H1 (cell line): ENCODE measurements at regions of chr5 and their contacts with region 1.

Region 1: DNA sequence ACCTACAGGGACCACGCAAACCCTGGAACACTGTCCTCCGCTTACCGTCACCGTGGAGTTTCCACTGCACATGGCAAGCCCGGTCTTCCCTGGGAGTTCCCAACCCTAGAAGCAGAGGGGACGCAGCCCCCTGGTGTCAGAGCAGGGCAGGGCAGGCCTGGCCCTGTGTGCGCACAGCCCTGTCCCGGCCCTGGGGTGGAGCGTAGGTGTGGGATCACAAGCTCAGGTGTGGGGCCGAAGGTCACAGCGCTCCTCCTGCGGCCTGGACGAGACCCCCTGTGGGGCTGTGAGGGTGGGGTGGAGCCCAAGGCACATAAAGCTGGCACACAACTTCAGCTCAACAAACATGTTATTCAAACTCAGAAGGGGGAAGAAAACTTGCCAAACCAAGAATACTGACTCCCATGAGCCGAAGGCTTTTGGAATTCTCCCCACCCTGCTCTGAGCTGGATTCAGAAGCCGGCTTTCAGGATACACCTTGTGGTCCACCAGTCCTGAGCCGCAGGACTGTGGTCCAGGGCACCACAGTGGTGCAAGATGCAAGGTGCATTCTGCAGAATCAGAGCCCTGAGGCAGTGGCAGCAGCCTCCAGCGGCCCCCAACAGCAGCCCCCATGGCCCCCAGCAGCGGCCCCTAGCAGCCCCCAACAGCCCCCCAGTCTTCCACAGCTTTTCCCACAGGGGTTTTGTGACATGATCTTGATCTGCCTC is 11.8 kb upstream of the EXOC3 start:
- DNase-seq: peak; percentile 38 to 84
- H3K4me3 ChIP-seq: no peak overlapping the region
- H3K27ac ChIP-seq: no peak overlapping the region
- H3K4me1 ChIP-seq: peaks cover 0 to 3% (median 1%) of the 10 kb centered on the region in 4 experiments; a peak in 1 of 7 replicates
- H3K27me3 ChIP-seq: no peaks in the 10 kb centered on the region
- CTCF ChIP-seq: peak in 2 of 3 experiments; percentile 87 to 96; a peak in 3 of 4 replicates
- EP300 ChIP-seq: no peak
- POLR2A ChIP-seq: no peak
- RAD21 ChIP-seq: peak; percentile 83 to 90

Region 2: DNA sequence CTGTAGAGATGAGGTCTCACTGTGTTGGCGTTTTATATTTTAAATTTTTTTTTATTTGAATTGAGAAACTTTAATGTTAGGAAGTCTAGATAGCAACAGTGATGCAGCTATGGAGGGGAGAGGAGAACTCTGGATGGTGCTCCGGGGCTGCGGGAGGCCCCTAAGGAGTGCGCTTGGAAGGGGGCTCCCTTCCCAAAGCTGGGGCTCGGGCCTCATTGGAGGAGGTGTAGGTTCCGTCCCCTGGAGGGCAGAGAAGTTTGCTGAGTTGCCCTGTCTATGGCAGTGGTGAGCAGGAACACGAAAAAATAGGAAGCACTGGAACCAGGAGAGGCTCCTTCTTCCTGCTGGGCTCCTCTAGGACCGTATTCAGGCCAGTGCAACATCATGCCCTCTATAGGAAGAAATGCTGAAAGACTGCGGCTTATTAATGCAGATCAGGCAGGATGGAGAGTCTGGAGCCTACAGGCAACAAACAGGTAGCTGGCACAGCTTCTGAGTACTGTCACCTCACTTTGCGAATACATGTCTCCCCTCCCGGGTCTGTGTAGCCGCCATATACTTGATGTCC is 93.5 kb before region 1 on chr5:
- CTCF ChIA-PET with region 1: interaction called, 13 read pairs
- POLR2A ChIA-PET with region 1: no interaction called
- DNase-seq: no peak
- H3K4me3 ChIP-seq: no peak overlapping the region
- H3K27ac ChIP-seq: no peak overlapping the region
- H3K4me1 ChIP-seq: no peaks in the 10 kb centered on the region; a peak in 1 of 7 replicates
- H3K27me3 ChIP-seq: peaks cover 0 to 2% (median 2%) of the 10 kb centered on the region in 4 experiments; a peak in 6 of 7 replicates
- CTCF ChIP-seq: peak; percentile 19 to 68 (median 54)
- EP300 ChIP-seq: no peak
- POLR2A ChIP-seq: no peak
- RAD21 ChIP-seq: peak; percentile 32 to 56; a peak in 3 of 4 replicates

Region 3: GRCh38 chr5:399296-400281 is 31.6 kb before region 1 on chr5:
- CTCF ChIA-PET with region 1: interaction called, 13 read pairs
- POLR2A ChIA-PET with region 1: interaction called, 3 read pairs
- DNase-seq: peak; percentile 31 to 82
- H3K4me3 ChIP-seq: peak overlapping the region in 3 of 4 experiments; percentile 23 to 35 (median 32); a peak in 5 of 8 replicates
- H3K27ac ChIP-seq: peak overlapping the region; percentile 69
- H3K4me1 ChIP-seq: peaks cover 0 to 16% (median 11%) of the 10 kb centered on the region in 4 experiments; a peak in 5 of 7 replicates
- H3K27me3 ChIP-seq: peaks cover 0 to 3% (median 2%) of the 10 kb centered on the region in 4 experiments; a peak in 3 of 7 replicates
- CTCF ChIP-seq: no peak
- EP300 ChIP-seq: peak in 1 of 2 experiments; percentile 95; a peak in 2 of 3 replicates
- POLR2A ChIP-seq: peak in 1 of 2 experiments; percentile 42; a peak in 1 of 3 replicates
- RAD21 ChIP-seq: peak in 1 of 2 experiments; percentile 1; a peak in 1 of 4 replicates

Region 4: DNA sequence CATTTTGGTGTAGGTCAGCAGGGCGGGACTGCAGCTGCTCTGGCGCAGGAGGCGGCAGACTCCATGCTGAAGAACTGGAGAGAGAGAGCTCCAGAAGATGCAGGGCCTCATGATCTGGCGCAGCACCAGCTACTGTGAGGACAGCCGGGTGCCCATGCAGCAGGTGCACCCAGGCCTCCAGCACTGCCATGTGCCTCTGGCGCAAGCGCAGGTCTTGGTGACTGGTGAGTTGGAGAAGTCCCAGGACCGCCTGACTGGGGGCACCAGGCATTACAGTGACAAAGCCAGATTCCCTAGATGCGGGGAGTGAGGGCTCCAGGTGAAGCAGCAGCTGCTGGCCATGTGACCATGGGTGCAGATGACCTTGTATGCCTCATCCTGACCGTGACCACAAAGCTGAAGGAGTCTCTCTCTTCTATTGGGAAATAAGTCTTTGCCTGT is 12.5 kb before region 1 on chr5:
- CTCF ChIA-PET with region 1: interaction called, 99 read pairs
- POLR2A ChIA-PET with region 1: interaction called, 3 read pairs
- DNase-seq: no peak
- H3K4me3 ChIP-seq: no peak overlapping the region
- H3K27ac ChIP-seq: no peak overlapping the region
- H3K4me1 ChIP-seq: peaks cover 0 to 10% (median 7%) of the 10 kb centered on the region in 4 experiments; a peak in 3 of 7 replicates
- H3K27me3 ChIP-seq: peaks cover 0 to 2% (median 0%) of the 10 kb centered on the region in 4 experiments; a peak in 1 of 7 replicates
- CTCF ChIP-seq: no peak
- EP300 ChIP-seq: no peak
- POLR2A ChIP-seq: no peak
- RAD21 ChIP-seq: no peak